Natural killer cell (primary cell): ENCODE measurements at regions of chr18 and their contacts with region 1.

Region 1: GRCh38 chr18:79156327-79156726 is 87.1 kb downstream of the ATP9B start:
- DNase-seq: no peak
- ATAC-seq: no peak
- H3K4me3 ChIP-seq: no peak overlapping the region
- H3K4me3 Mint-ChIP-seq: peak overlapping the region; percentile 45
- H3K27ac ChIP-seq: peak overlapping the region; percentile 72
- H3K27ac Mint-ChIP-seq: peak overlapping the region; percentile 90 to 94
- H3K4me1 ChIP-seq: peaks cover 17% of the 10 kb centered on the region
- H3K4me1 Mint-ChIP-seq: peaks cover 35 to 41% of the 10 kb centered on the region in 2 donors
- H3K27me3 ChIP-seq: no peaks in the 10 kb centered on the region
- H3K27me3 Mint-ChIP-seq: no peaks in the 10 kb centered on the region
- CTCF ChIP-seq: no peak

Region 2: GRCh38 chr18:78255013-78255412 is 901.3 kb before region 1 on chr18:
- intact Hi-C with region 1: no loop called
- DNase-seq: no peak
- ATAC-seq: no peak
- H3K4me3 ChIP-seq: no peak overlapping the region
- H3K4me3 Mint-ChIP-seq: no peak overlapping the region
- H3K27ac ChIP-seq: no peak overlapping the region
- H3K27ac Mint-ChIP-seq: no peak overlapping the region
- H3K4me1 ChIP-seq: no peaks in the 10 kb centered on the region
- H3K4me1 Mint-ChIP-seq: no peaks in the 10 kb centered on the region
- H3K27me3 ChIP-seq: no peaks in the 10 kb centered on the region
- H3K27me3 Mint-ChIP-seq: no peaks in the 10 kb centered on the region
- CTCF ChIP-seq: no peak

Region 3: DNA sequence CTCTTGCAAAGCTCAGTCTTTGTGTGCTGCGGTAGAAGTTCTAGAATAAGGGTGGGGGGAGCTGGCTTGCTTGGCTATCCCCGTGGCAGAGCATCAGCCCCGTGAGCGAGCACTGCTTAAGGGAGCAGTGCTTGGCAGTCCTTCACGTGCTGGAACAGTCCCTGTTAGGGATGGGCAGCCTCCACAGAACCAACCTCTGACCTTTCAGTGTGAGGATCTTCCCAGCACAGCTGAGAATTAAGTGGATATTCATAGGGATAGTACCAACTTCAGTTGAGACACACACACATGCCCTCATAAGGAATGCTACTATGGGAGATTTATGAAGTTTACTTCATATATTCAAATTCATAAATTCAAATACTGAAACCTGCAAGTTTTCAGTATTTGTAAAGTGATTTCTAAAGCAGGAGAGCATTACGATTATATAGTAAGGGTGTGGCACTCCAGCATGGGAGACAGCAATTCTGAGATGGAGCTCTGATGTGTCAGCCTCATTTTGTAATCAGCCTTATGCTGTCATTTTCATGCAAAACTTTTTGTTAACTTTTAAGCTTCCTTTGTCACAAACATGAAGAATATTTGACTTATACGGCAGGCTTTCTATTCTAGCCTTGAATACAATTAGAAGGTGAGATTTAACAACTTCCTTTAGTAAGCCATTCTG is 47.6 kb before region 1 on chr18:
- intact Hi-C with region 1: no loop called
- DNase-seq: no peak
- ATAC-seq: no peak
- H3K4me3 ChIP-seq: no peak overlapping the region
- H3K4me3 Mint-ChIP-seq: no peak overlapping the region
- H3K27ac ChIP-seq: no peak overlapping the region
- H3K27ac Mint-ChIP-seq: no peak overlapping the region
- H3K4me1 ChIP-seq: no peaks in the 10 kb centered on the region
- H3K4me1 Mint-ChIP-seq: peaks cover 20 to 32% of the 10 kb centered on the region in 2 donors
- H3K27me3 ChIP-seq: no peaks in the 10 kb centered on the region
- H3K27me3 Mint-ChIP-seq: no peaks in the 10 kb centered on the region
- CTCF ChIP-seq: no peak

Region 4: GRCh38 chr18:79139206-79139605 is 17.1 kb before region 1 on chr18:
- intact Hi-C with region 1: loop called (anchors 1 kb)
- DNase-seq: peak; percentile 47 to 70
- ATAC-seq: peak; percentile 95 to 99 (median 97)
- H3K4me3 ChIP-seq: no peak overlapping the region
- H3K4me3 Mint-ChIP-seq: no peak overlapping the region
- H3K27ac ChIP-seq: no peak overlapping the region
- H3K27ac Mint-ChIP-seq: peak overlapping the region; percentile 83 to 84
- H3K4me1 ChIP-seq: peaks cover 2% of the 10 kb centered on the region
- H3K4me1 Mint-ChIP-seq: peaks cover 10 to 20% of the 10 kb centered on the region in 2 donors
- H3K27me3 ChIP-seq: no peaks in the 10 kb centered on the region
- H3K27me3 Mint-ChIP-seq: no peaks in the 10 kb centered on the region
- CTCF ChIP-seq: no peak

Region 5: GRCh38 chr18:79191956-79192355 is 35.6 kb after region 1 on chr18:
- intact Hi-C with region 1: loop called (anchors 1 kb)
- DNase-seq: peak; percentile 30 to 33
- ATAC-seq: peak; percentile 90 to 98 (median 96)
- H3K4me3 ChIP-seq: no peak overlapping the region
- H3K4me3 Mint-ChIP-seq: peak overlapping the region; percentile 67
- H3K27ac ChIP-seq: no peak overlapping the region
- H3K27ac Mint-ChIP-seq: peak overlapping the region; percentile 82 to 89
- H3K4me1 ChIP-seq: peaks cover 5% of the 10 kb centered on the region
- H3K4me1 Mint-ChIP-seq: peaks cover 18 to 22% of the 10 kb centered on the region in 2 donors
- H3K27me3 ChIP-seq: no peaks in the 10 kb centered on the region
- H3K27me3 Mint-ChIP-seq: no peaks in the 10 kb centered on the region
- CTCF ChIP-seq: no peak

Region 6: DNA sequence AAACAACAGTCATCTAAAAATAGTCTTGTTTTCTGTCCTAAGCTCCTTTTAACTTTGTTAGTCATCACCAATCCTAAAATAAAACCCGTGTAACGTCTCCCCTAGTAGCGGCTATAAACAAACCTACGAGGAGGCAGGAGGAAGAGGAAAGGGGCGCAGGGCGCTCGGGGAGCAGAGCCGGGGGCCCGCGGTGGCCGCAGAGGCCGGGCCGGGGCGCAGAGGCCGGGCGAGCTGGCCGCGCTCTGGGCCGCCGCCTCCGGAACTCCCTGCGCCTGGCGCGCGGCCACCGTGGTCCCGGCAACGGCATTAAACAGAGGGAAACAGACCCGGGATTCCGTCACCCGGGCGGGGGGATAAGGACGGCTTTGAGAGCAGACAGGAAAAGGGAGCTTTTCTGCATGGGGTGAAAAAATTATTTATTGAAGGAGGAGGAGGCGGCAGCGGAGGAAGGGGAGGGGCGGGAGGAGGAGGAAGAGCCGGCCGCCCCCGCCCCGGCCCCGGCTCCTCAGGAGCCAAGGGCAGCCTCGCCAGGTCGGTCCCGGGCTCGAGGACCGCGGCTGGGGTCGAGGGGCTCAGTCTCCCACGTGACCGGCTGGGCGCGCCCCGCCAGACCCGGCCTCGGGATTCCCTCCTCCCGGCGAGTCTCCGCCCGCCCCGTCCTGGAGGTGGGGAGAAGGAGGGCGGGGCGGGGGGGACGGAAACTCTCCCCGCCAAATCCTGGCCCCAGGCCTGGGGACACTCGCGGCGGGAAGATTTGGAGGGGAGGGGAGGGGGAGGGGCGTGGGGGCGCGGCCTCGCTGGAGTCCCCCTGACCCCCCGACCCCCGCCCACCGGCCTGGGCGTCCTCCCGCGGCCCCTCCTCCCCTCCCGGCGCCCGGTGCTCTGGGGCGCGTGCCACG is 237.6 kb after region 1 on chr18:
- intact Hi-C with region 1: loop called (anchors 5 kb)
- DNase-seq: peak; percentile 17 to 66
- ATAC-seq: peak; percentile 14 to 31 (median 17)
- H3K4me3 ChIP-seq: peak overlapping the region; percentile 36
- H3K4me3 Mint-ChIP-seq: peak overlapping the region; percentile 89
- H3K27ac ChIP-seq: no peak overlapping the region
- H3K27ac Mint-ChIP-seq: peak overlapping the region; percentile 38 to 90
- H3K4me1 ChIP-seq: peaks cover 44% of the 10 kb centered on the region
- H3K4me1 Mint-ChIP-seq: peaks cover 10 to 22% of the 10 kb centered on the region in 2 donors
- H3K27me3 ChIP-seq: peaks cover 37% of the 10 kb centered on the region
- H3K27me3 Mint-ChIP-seq: peaks cover 38 to 40% of the 10 kb centered on the region in 2 donors
- CTCF ChIP-seq: no peak